T-cell (primary cell): ENCODE measurements at regions of chr11 and their contacts with region 1.

Region 1: DNA sequence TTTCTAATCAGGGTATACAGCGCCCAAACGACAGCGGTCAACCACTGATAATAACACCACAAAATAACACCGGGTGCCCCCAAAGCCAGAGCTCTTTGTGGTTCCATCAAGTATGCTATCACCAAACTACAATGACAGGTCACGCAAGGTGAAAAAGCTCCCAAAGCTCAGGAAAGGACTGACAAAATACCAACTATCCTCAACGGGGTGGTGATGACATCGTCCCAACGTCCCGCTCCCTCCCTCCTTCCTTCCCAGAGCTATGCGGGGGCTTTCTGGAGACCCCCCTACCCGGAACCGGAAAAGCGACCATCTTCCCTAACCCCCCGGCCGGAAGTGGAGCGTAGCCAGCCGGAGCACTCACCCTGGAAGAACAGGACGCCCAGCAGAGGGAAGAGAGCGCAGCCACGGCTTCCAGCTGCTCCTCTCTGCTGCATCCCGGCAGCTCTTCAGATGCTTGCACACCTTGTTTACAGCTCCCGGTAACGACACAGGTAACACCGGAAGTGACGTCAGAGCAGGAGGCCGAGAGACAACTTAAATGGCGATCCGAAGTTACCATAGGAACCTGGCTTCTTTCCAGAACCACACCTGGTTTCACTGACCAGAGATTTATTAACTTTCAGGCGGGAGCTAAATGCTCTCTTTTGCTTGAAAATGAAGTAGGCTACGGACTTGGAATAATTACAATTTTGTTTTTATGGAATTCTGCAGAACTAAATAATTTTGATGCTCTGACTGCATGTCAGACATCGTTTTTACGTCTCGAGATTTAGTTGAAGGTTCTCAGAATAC is at the start of gene MPZL3:
- DNase-seq: peak; percentile 70 to 96 (median 83)
- ATAC-seq: peak; percentile 72 to 89 (median 78)
- H3K4me3 ChIP-seq: peak within 1 kb of the TSS; percentile 81 to 93
- H3K4me3 Mint-ChIP-seq: peak within 1 kb of the TSS; percentile 98 to 99 (median 99)
- H3K27ac ChIP-seq: peak within 1 kb of the TSS; percentile 98
- H3K27ac Mint-ChIP-seq: peak within 1 kb of the TSS; percentile 99 to 100
- H3K4me1 ChIP-seq: peaks cover 6 to 14% of the 10 kb centered on the region in 2 experiments
- H3K4me1 Mint-ChIP-seq: peaks cover 32 to 47% (median 44%) of the 10 kb centered on the region in 3 donors
- H3K27me3 ChIP-seq: no peaks in the 10 kb centered on the region
- H3K27me3 Mint-ChIP-seq: peaks cover 0 to 2% of the 10 kb centered on the region in 2 donors
- total RNA-seq, gene MPZL3: 9.8 to 25.2 (median 16.5) TPM

Region 2: GRCh38 chr11:118224511-118225188 is 27.4 kb before region 1 on chr11 and contains the start of gene JAML:
- CTCF ChIA-PET with region 1: interaction called in 1 of 2 experiments, 7 read pairs
- POLR2A ChIA-PET with region 1: interaction called, 3 to 10 read pairs
- DNase-seq: peak; percentile 39 to 86 (median 67)
- ATAC-seq: peak; percentile 84 to 90 (median 90)
- H3K4me3 ChIP-seq: peak within 1 kb of the TSS; percentile 63 to 87
- H3K4me3 Mint-ChIP-seq: peak within 1 kb of the TSS; percentile 83 to 91 (median 90)
- H3K27ac ChIP-seq: peak within 1 kb of the TSS; percentile 84
- H3K27ac Mint-ChIP-seq: peak within 1 kb of the TSS in 1 of 2 donors; percentile 94
- H3K4me1 ChIP-seq: peaks cover 73 to 75% of the 10 kb centered on the region in 2 experiments
- H3K4me1 Mint-ChIP-seq: peaks cover 40 to 61% (median 55%) of the 10 kb centered on the region in 3 donors
- H3K27me3 ChIP-seq: no peaks in the 10 kb centered on the region
- H3K27me3 Mint-ChIP-seq: no peaks in the 10 kb centered on the region
- total RNA-seq, gene JAML: 60.8 to 165 (median 95.8) TPM

Region 3: DNA sequence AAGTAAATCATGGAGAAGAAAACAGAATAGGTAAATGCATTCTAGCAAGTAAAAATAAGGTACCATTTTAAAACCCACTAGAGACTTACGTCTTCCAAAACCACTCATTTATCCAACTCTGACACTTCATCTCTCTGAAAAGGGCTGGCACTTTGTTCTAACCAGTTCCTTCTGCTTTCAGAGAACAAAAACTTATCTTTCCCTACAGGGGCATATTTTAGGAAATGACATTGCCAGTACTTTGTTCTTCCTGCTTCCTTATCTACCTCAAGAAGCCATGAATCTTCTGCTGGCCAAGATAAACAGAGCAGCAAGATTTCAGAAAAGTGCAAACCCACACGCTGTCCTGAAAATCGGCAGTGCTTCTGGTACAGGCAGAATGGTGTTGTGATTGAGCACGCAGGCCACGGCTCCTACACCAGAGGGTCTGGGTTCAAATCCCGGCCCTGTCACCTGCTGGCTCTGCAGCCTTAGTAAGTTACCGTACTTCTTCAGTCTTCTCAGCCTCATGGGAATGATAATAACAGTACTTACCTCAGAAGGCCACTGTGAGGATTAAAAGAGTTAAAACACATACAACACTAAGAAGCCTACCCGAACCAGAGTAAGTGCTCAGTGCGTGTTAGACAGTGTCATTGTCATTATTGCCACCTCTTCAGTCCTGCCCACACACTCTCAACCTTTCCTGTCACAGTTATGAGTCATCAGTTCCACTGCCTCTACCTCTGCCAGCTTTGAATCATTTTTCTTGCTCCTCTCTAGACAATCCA is 10.9 kb before region 1 on chr11:
- CTCF ChIA-PET with region 1: interaction called in 1 of 2 experiments, 10 read pairs
- POLR2A ChIA-PET with region 1: interaction called, 3 to 11 read pairs
- DNase-seq: peak in 21 of 35 experiments; percentile 14 to 81 (median 40)
- ATAC-seq: peak; percentile 89 to 99 (median 97)
- H3K4me3 ChIP-seq: peak overlapping the region in 1 of 2 donors; percentile 16
- H3K4me3 Mint-ChIP-seq: peak overlapping the region; percentile 51 to 74 (median 62)
- H3K27ac ChIP-seq: peak overlapping the region; percentile 90
- H3K27ac Mint-ChIP-seq: peak overlapping the region; percentile 92 to 94
- H3K4me1 ChIP-seq: peaks cover 23 to 42% of the 10 kb centered on the region in 2 experiments
- H3K4me1 Mint-ChIP-seq: peaks cover 64 to 83% (median 80%) of the 10 kb centered on the region in 3 donors
- H3K27me3 ChIP-seq: no peaks in the 10 kb centered on the region
- H3K27me3 Mint-ChIP-seq: no peaks in the 10 kb centered on the region

Region 4: DNA sequence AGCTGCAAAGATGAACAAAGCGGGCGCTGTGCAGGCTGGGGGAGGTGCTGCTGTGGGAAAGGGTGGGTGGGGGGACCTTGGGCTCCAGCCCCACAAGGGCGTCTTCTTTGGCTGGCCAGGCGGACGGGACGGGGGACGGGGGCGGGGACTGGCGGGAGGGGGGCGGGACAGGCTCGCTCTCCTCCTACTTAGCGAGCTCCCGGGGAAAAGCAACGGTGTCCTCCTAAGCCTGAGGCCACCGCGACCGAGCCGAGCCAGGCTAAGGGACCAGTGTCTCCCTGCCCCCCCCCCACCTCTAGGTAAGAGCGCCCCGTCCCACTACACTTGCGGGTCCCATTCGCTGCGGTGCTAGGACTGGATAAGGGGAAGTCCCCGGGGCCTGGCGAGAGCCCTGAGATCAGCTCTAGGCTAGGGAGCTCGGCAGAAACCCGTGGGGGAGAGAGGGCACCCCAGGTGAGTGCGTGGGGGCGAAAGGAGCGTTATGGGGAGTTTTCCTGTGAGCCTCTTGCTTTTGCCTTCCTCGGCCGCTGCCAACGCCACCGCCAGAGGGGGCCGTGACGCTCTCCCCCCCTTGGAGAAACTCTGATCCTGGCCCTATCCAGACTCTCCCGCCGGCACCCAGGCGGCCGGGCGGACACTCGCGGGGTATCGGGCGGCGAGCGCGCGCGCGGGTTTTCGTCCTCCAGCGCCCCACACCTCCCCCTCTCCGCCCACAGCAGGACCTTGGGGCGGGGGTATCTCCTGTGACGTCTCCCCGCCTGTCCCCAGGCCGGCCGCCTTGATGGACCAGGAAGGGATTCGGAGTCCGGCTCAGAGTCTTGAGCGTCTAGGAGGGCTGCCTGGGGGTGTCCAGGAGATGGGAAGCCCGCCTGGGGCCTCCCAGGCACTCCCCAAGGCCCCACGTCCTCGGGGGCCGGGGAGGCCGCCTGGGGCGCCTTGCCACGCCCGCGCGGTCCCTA is 355.6 kb after region 1 on chr11 and contains the start of gene PHLDB1:
- CTCF ChIA-PET with region 1: no interaction called
- POLR2A ChIA-PET with region 1: no interaction called
- DNase-seq: peak in 31 of 35 experiments; percentile 13 to 72 (median 32)
- ATAC-seq: peak; percentile 4 to 15 (median 8)
- H3K4me3 ChIP-seq: peak within 1 kb of the TSS; percentile 62 to 73
- H3K4me3 Mint-ChIP-seq: peak within 1 kb of the TSS; percentile 76 to 84 (median 83)
- H3K27ac ChIP-seq: peak within 1 kb of the TSS; percentile 37
- H3K27ac Mint-ChIP-seq: peak within 1 kb of the TSS in 1 of 2 donors; percentile 74
- H3K4me1 ChIP-seq: peaks cover 14 to 41% of the 10 kb centered on the region in 2 experiments
- H3K4me1 Mint-ChIP-seq: peaks cover 20 to 31% (median 25%) of the 10 kb centered on the region in 3 donors
- H3K27me3 ChIP-seq: peaks cover 3 to 26% of the 10 kb centered on the region in 2 experiments
- H3K27me3 Mint-ChIP-seq: peaks cover 0 to 13% of the 10 kb centered on the region in 2 donors
- total RNA-seq, gene PHLDB1: 1.8 to 7.8 (median 4.0) TPM